Thyroid gland (tissue), 4 donors: ENCODE measurements at regions of chr17 and their contacts with region 1.

Region 1: GRCh38 chr17:18217412-18218015 is 7.9 kb upstream of the LLGL1 start:
- DNase-seq: peak; percentile 77
- H3K4me3 ChIP-seq: no peak overlapping the region
- H3K27ac ChIP-seq: no peak overlapping the region
- H3K4me1 ChIP-seq: peaks cover 0 to 9% of the 10 kb centered on the region in 2 donors
- H3K27me3 ChIP-seq: no peaks in the 10 kb centered on the region
- CTCF ChIP-seq: peak; percentile 73 to 94 (median 86)
- POLR2A ChIP-seq: no peak

Region 2: DNA sequence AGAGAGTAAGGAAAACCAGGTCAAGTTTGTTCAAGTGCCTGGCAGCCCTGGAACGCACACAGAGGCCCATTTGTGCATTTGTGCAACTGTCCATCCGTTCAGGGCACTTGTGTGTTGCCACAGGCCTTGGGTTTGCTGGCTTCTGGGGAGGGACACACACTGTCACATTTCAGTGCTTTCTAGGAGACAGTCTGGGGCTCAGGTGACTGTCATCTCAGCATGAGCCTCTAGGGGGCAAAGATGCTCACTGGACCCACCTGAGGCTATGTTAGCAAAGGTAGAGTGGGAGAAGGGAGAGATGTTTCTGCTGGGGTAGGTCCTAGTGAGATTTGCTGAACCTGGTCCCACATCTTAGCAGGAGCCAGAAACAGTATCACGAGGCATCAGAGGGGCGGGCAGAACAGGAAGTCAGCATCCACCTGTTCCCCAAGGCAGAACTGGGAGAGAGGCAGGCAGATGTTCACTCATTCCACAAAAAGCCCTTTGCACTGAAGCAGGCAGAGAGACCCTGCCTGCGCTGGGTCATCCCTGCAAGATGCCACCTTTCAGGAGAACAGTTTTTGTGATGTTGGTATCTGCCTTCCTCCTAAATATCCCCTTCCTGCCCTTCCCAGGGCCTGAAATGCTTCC is 487.8 kb before region 1 on chr17:
- intact Hi-C with region 1: no loop called
- DNase-seq: peak; percentile 92 to 93
- H3K4me3 ChIP-seq: no peak overlapping the region
- H3K27ac ChIP-seq: peak overlapping the region; percentile 32 to 79 (median 64)
- H3K4me1 ChIP-seq: peaks cover 26 to 37% of the 10 kb centered on the region in 2 donors
- H3K27me3 ChIP-seq: no peaks in the 10 kb centered on the region
- CTCF ChIP-seq: peak; percentile 44 to 92 (median 80)
- POLR2A ChIP-seq: peak in 1 of 2 donors; percentile 7

Region 3: DNA sequence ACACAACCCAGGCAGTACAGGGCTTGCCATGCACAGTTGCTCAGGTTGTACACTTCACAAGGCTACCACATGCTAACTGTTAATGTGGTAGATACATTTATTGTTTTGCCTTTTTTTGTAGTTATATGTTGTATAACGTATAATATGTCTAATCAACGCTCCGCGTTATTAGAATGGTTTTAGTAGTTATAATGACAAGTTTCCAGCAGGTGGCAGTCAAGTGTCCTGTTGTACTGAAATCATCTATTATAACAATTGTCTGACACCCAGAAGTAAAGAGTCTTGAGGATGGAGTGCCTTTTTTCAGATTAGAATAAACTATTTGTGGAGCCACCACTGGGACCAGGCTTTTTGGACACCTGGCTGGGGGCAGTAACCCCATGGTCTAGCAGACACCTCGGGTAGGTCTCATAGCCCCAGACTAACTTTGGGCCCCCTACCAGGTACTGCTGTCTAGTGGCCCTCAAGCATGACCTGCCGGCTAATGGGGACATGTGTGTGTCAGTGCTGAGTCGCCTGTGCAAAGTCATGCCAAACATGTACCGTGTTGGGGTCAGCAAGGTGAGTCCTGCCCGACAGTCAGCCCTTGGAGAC is 76.2 kb before region 1 on chr17:
- intact Hi-C with region 1: loop called (anchors 10 kb)
- DNase-seq: peak in 1 of 2 donors; percentile 22
- H3K4me3 ChIP-seq: no peak overlapping the region
- H3K27ac ChIP-seq: no peak overlapping the region
- H3K4me1 ChIP-seq: no peaks in the 10 kb centered on the region
- H3K27me3 ChIP-seq: no peaks in the 10 kb centered on the region
- CTCF ChIP-seq: peak; percentile 43 to 65 (median 60)
- POLR2A ChIP-seq: no peak

Region 4: GRCh38 chr17:18363101-18364049 is 145.9 kb after region 1 on chr17 and contains the start of gene SHMT1:
- intact Hi-C with region 1: no loop called
- DNase-seq: peak; percentile 97 to 98
- H3K4me3 ChIP-seq: peak within 1 kb of the TSS; percentile 9 to 75 (median 66)
- H3K27ac ChIP-seq: peak within 1 kb of the TSS; percentile 66 to 93 (median 85)
- H3K4me1 ChIP-seq: peaks cover 7 to 15% of the 10 kb centered on the region in 2 donors
- H3K27me3 ChIP-seq: no peaks in the 10 kb centered on the region
- CTCF ChIP-seq: peak in 1 of 6 experiments; percentile 6
- POLR2A ChIP-seq: peak; percentile 65 to 80
- total RNA-seq, gene SHMT1: 59.9 to 117 (median 82.7) TPM